Natural killer cell (primary cell): ENCODE measurements at regions of chr2 and their contacts with region 1.

Region 1: GRCh38 chr2:174341286-174341994 is 6.7 kb downstream of the SP9 start:
- DNase-seq: peak; percentile 87 to 92
- ATAC-seq: peak; percentile 77 to 86 (median 77)
- H3K4me3 ChIP-seq: no peak overlapping the region
- H3K4me3 Mint-ChIP-seq: peak overlapping the region; percentile 88
- H3K27ac ChIP-seq: no peak overlapping the region
- H3K27ac Mint-ChIP-seq: peak overlapping the region; percentile 75 to 87
- H3K4me1 ChIP-seq: peaks cover 48% of the 10 kb centered on the region
- H3K4me1 Mint-ChIP-seq: peaks cover 34 to 50% of the 10 kb centered on the region in 2 donors
- H3K27me3 ChIP-seq: peaks cover 75% of the 10 kb centered on the region
- H3K27me3 Mint-ChIP-seq: peaks cover 59 to 70% of the 10 kb centered on the region in 2 donors
- CTCF ChIP-seq: peak; percentile 96

Region 2: DNA sequence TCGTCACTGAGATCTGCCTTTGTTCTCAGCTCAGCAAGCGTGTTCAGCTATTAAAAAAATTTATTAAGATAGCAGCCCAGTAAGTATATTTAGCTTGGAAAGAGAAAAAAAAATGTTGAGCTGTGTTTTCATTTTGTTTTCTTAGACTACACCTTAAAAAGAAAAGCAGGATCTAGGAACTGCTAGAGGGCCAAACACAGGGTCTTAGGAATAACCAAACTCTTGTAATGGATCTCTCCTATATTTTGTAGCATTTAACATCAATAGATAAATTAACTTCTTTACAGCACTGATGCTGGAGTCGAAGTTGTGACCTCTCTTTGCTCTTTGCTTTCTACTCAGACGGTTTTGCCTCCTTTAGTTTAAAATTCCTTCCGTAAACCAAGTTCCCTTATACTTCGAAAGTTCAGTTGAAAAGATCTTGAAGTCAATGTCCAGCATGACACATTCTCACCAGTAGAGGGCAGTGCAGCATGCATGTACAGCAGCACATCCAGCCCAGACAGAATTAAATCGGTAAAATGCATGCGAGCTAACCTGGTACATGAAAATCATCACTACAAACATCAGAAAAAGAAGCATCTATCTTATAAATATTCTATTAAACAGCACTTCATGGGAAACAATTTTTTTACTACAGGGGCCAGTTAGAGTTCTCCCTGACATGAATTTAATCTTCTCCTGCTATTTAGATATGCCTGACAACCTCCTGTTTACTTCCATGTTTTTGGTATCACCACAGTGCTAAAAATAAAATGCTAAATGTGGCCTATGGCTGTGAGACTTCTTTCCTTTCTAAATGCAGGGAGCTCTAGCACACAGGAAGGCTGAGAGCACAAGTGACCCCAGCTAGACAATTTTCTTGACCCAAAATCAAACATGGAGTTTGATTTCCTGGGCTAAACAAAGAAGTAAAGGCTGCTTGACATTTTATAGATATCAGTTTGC is 1314.0 kb before region 1 on chr2:
- intact Hi-C with region 1: loop called (anchors 1 kb)
- DNase-seq: peak; percentile 54 to 90
- ATAC-seq: peak; percentile 72 to 87 (median 84)
- H3K4me3 ChIP-seq: no peak overlapping the region
- H3K4me3 Mint-ChIP-seq: no peak overlapping the region
- H3K27ac ChIP-seq: no peak overlapping the region
- H3K27ac Mint-ChIP-seq: no peak overlapping the region
- H3K4me1 ChIP-seq: no peaks in the 10 kb centered on the region
- H3K4me1 Mint-ChIP-seq: no peaks in the 10 kb centered on the region
- H3K27me3 ChIP-seq: peaks cover 2% of the 10 kb centered on the region
- H3K27me3 Mint-ChIP-seq: peaks cover 20 to 26% of the 10 kb centered on the region in 2 donors
- CTCF ChIP-seq: peak; percentile 98

Region 3: DNA sequence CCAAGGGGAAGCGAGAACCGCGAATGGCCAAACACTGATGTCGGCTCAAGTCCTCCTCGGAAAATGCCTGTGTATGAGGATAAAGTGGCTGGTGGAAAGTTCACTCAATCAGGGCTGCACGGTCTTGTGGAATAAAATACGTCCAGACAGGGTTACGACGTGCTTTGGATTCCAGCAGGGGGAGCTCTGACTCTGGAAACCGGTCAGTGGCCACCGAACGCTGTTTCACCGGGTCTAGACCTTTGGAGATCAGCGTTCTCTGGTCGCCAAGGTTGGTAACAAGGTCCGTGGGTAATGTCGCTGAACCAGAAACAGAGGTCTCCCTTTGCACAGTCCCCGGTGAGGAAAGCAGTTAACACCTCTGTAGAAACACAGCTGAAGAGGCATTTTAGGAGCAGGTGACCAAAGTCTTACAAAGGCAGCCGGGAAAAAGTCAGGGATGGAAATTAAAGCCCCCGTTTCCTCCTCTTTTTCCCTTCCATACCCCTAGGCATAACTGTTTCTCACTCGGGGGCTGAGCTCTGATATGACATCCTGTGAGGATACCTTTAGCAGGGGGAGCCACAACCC is 939.0 kb before region 1 on chr2:
- intact Hi-C with region 1: loop called (anchors 1 kb)
- DNase-seq: peak; percentile 51 to 85
- ATAC-seq: peak; percentile 82 to 94 (median 82)
- H3K4me3 ChIP-seq: no peak overlapping the region
- H3K4me3 Mint-ChIP-seq: no peak overlapping the region
- H3K27ac ChIP-seq: no peak overlapping the region
- H3K27ac Mint-ChIP-seq: no peak overlapping the region
- H3K4me1 ChIP-seq: peaks cover 6% of the 10 kb centered on the region
- H3K4me1 Mint-ChIP-seq: peaks cover 4 to 6% of the 10 kb centered on the region in 2 donors
- H3K27me3 ChIP-seq: peaks cover 6% of the 10 kb centered on the region
- H3K27me3 Mint-ChIP-seq: peaks cover 49 to 52% of the 10 kb centered on the region in 2 donors
- CTCF ChIP-seq: peak; percentile 77

Region 4: DNA sequence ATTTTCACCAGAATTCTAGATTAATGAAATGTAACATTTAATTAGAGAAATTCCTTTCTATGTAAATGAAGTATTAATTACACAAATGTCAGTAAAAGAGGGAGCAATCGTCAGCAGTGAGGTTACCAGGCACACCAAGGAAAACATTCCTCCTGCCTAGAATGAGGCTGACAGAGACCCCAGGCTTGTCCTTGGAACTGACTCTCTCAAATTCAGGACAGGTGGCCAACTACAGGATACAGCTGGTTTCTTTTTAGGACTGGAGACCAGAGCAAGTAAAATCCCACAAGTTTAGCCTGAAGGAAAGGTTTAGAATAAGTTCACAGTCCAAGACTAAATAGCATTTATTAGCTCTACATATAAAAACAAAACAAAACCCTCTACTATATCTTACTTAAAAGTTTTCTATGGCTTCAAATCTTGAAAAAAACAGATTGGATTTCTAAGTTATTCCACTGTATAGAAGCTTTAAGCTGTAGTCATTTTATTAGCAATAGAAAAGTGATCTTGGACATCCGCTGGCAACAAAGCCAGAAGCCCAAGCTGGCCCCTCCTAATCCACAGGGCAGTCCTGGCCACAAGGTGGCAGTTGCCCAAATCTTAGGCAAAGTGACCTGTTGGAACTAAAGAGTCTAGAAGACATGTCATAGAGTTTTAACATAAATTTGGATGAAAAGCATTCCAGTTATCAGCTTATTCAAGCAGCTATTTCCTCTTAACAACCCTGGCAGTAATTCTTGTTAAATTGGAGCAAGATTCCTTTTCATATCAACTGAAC is 457.2 kb before region 1 on chr2:
- intact Hi-C with region 1: loop called (anchors 1 kb)
- DNase-seq: peak in 1 of 2 donors; percentile 57
- ATAC-seq: peak; percentile 54 to 74 (median 68)
- H3K4me3 ChIP-seq: no peak overlapping the region
- H3K4me3 Mint-ChIP-seq: no peak overlapping the region
- H3K27ac ChIP-seq: no peak overlapping the region
- H3K27ac Mint-ChIP-seq: no peak overlapping the region
- H3K4me1 ChIP-seq: no peaks in the 10 kb centered on the region
- H3K4me1 Mint-ChIP-seq: peaks cover 10 to 11% of the 10 kb centered on the region in 2 donors
- H3K27me3 ChIP-seq: peaks cover 1% of the 10 kb centered on the region
- H3K27me3 Mint-ChIP-seq: peaks cover 8 to 46% of the 10 kb centered on the region in 2 donors
- CTCF ChIP-seq: peak; percentile 42

Region 5: DNA sequence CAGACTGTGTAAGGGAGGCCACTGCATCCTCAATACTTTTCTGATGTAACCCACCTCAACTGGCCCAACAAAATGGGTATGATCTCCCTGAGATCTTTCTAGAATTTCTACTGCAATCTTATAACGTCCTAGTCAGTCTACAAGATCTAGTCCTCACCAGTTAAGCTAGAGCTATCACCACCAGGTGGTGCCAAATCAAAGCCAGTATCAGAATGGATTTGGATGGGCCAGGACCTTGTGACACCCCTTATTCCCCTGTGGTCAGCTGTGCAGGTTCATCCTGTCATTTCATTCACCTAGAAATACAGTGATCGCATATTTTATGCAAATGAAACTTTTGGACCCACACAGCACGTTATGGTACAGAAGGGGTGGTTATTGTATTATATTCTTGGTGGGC is 183.4 kb before region 1 on chr2:
- intact Hi-C with region 1: loop called (anchors 1 kb)
- DNase-seq: peak in 1 of 2 donors; percentile 53
- ATAC-seq: peak in 1 of 3 donors; percentile 47
- H3K4me3 ChIP-seq: no peak overlapping the region
- H3K4me3 Mint-ChIP-seq: no peak overlapping the region
- H3K27ac ChIP-seq: no peak overlapping the region
- H3K27ac Mint-ChIP-seq: no peak overlapping the region
- H3K4me1 ChIP-seq: no peaks in the 10 kb centered on the region
- H3K4me1 Mint-ChIP-seq: peaks cover 8 to 19% of the 10 kb centered on the region in 2 donors
- H3K27me3 ChIP-seq: no peaks in the 10 kb centered on the region
- H3K27me3 Mint-ChIP-seq: no peaks in the 10 kb centered on the region
- CTCF ChIP-seq: peak; percentile 34

Region 6: DNA sequence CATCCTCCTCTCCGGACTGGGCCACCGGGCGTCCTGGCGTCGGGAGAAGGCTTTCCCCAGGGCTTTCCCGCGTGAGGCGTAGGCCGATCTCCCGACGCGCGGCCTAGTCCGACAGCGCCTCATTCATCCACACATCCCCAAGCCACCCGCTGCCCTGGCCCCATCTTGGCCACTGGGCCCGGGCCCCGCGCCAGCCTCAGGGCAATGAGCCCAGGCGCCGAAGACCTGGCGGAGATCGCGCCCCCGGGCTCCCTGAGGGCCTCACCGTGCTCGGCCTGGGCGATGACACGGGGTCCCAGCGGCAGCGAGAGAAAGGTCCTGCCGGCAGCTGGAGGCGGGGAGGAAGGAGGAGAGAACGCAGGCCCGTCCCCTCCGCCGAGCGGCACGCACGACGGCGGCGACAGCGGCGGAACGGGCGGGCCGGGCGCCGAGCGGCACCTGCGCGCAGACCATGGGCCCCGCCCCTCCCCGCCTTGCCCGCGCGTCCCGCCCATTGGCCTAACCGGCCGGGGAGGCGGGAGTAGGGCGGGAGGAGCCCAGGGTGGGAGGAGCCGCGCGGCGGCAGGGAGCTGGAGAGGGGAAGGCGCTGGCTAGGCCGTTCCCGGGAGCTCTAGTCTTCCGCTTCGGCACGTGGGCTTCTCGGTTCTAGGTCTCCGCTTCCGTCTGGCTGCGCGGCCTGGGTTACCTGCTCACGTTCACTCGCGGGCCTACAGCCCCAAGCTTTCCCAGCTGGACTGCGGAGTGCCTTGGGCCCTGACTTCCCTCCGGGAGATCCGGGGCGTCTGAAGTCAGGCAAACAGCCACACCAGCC is 93.0 kb before region 1 on chr2 and contains the start of gene OLA1:
- intact Hi-C with region 1: loop called (anchors 1 kb)
- DNase-seq: peak; percentile 94 to 97
- ATAC-seq: peak; percentile 96 to 99 (median 96)
- H3K4me3 ChIP-seq: peak within 1 kb of the TSS; percentile 87
- H3K4me3 Mint-ChIP-seq: peak within 1 kb of the TSS; percentile 90
- H3K27ac ChIP-seq: peak within 1 kb of the TSS; percentile 70
- H3K27ac Mint-ChIP-seq: peak within 1 kb of the TSS; percentile 78 to 91
- H3K4me1 ChIP-seq: peaks cover 13% of the 10 kb centered on the region
- H3K4me1 Mint-ChIP-seq: peaks cover 19 to 29% of the 10 kb centered on the region in 2 donors
- H3K27me3 ChIP-seq: no peaks in the 10 kb centered on the region
- H3K27me3 Mint-ChIP-seq: peaks cover 2 to 6% of the 10 kb centered on the region in 2 donors
- CTCF ChIP-seq: no peak
- total RNA-seq, gene OLA1: 42.3 to 45.9 (median 43.9) TPM

Region 7: DNA sequence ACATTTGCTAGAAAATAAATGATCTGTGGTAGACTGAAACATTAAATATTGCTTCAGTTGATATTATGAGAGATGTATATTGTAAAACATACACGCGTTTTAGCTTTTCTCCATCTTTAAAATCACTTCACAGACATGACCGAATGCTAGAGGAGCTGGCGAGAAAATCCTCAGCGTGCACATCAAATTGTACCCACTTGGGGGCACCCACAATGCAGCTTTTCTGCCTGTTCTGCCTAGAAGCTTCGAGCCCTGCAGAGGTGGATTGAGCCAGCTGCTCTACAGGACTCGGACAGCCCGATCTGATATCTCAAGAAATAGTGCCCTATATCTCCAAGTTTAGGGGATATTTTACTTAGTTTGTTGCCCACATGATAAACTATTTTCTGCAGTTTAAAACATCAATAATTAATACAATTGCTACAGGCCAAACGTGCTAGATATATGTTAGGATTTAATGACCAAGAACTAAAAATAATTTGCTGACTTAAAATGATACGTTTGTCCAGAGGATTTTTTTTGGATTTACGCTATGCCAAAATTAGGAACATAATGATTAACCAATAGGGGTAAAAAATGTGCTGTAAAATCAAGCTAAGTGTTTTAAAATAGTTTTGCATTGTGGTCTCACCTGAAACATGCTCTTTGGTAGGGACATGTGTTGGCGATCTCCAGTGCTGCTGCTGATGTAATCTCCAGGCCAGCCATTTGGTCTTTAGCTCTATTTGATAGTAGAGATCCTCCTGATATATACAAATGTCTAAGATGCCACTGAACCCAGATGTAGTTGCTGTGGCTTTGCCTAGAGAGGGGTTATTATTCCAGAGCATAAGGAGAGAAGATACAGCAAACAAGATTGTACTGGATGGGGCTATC is 862.4 kb after region 1 on chr2:
- intact Hi-C with region 1: no loop called
- DNase-seq: peak; percentile 35 to 67
- ATAC-seq: peak; percentile 78 to 84 (median 82)
- H3K4me3 ChIP-seq: no peak overlapping the region
- H3K4me3 Mint-ChIP-seq: no peak overlapping the region
- H3K27ac ChIP-seq: no peak overlapping the region
- H3K27ac Mint-ChIP-seq: no peak overlapping the region
- H3K4me1 ChIP-seq: peaks cover 11% of the 10 kb centered on the region
- H3K4me1 Mint-ChIP-seq: peaks cover 25 to 26% of the 10 kb centered on the region in 2 donors
- H3K27me3 ChIP-seq: peaks cover 8% of the 10 kb centered on the region
- H3K27me3 Mint-ChIP-seq: peaks cover 15 to 18% of the 10 kb centered on the region in 2 donors
- CTCF ChIP-seq: peak; percentile 63

Region 8: GRCh38 chr2:176072951-176073904 is 1731.8 kb after region 1 on chr2:
- intact Hi-C with region 1: loop called (anchors 5 kb)
- DNase-seq: no peak
- ATAC-seq: no peak
- H3K4me3 ChIP-seq: no peak overlapping the region
- H3K4me3 Mint-ChIP-seq: no peak overlapping the region
- H3K27ac ChIP-seq: no peak overlapping the region
- H3K27ac Mint-ChIP-seq: no peak overlapping the region
- H3K4me1 ChIP-seq: no peaks in the 10 kb centered on the region
- H3K4me1 Mint-ChIP-seq: peaks cover 0 to under 1% of the 10 kb centered on the region in 2 donors
- H3K27me3 ChIP-seq: peaks cover 64% of the 10 kb centered on the region
- H3K27me3 Mint-ChIP-seq: peaks cover 70 to 72% of the 10 kb centered on the region in 2 donors
- CTCF ChIP-seq: no peak